Pancreas (tissue), 10 donors: ENCODE measurements at regions of chr16 and their contacts with region 1.

Region 1: DNA sequence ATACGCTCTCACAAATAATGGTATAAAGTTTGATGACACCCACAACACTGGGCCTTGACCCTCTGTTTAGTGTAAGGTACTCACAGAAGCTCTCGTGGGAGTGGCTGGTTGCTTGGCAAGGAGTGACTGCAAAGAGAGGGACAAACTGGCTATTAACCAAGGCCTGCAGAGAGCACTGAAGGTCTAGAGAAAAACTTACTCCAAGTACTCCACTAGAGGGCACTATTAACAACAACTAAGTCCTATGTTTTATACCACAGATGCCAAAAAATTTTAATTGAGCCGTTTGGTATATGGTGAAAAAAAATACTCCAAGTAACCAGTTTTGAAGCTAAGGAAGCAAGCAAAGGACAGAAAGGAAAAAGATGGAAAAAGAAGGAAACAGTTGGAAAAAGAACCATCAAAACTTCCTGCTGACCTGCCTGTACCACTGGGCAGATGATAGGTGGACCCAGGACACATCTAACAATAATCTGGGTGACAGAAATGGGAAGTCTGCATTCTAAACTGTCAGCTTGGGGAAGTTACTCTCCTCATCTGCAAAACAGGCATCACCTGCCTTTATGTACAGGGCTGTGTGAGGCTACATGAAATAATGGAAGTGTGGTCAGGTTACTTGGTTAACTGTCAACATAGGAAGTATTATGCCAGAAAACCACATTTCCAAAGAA is 23.2 kb downstream of the DYNC1LI2 start:
- DNase-seq: peak in 3 of 6 donors; percentile 23 to 41 (median 26)
- ATAC-seq: peak; percentile 83 to 95 (median 91)
- H3K4me3 ChIP-seq: no peak overlapping the region
- H3K27ac ChIP-seq: no peak overlapping the region
- H3K4me1 ChIP-seq: no peaks in the 10 kb centered on the region
- H3K27me3 ChIP-seq: no peaks in the 10 kb centered on the region
- CTCF ChIP-seq: peak in 3 of 4 donors; percentile 59 to 69 (median 60)

Region 2: DNA sequence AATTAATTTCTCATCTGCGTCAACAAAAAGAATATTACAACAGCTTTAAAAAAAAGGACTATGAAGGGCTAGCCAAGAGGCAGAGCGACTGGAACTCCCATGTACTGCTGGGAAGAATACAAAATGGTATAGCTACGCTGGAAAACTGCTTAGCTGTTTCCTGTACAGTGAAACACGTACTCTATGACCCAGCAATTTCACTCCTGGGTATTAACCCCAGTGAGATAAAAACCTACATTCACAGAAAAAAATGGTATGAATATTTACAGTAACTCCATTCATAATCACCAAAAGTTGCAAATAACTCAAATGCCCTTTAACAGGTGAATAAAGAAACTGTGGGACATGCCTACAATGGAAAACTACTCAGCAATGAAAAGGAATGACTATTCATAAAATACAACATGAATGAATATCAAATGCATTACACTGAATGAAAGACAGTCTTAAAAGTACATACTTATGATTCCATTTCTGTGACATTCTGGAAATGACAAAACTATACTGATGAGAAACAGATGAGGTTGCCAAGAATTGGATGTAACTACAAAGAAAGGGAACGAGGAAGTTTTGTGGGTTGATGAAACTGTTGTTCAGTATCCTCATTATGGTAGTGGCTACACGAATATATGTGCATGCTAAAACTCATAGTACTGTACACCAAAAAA is 59.3 kb before region 1 on chr16:
- intact Hi-C with region 1: no loop called
- DNase-seq: no peak
- ATAC-seq: no peak
- H3K4me3 ChIP-seq: no peak overlapping the region
- H3K27ac ChIP-seq: no peak overlapping the region
- H3K4me1 ChIP-seq: no peaks in the 10 kb centered on the region
- H3K27me3 ChIP-seq: no peaks in the 10 kb centered on the region
- CTCF ChIP-seq: no peak

Region 3: DNA sequence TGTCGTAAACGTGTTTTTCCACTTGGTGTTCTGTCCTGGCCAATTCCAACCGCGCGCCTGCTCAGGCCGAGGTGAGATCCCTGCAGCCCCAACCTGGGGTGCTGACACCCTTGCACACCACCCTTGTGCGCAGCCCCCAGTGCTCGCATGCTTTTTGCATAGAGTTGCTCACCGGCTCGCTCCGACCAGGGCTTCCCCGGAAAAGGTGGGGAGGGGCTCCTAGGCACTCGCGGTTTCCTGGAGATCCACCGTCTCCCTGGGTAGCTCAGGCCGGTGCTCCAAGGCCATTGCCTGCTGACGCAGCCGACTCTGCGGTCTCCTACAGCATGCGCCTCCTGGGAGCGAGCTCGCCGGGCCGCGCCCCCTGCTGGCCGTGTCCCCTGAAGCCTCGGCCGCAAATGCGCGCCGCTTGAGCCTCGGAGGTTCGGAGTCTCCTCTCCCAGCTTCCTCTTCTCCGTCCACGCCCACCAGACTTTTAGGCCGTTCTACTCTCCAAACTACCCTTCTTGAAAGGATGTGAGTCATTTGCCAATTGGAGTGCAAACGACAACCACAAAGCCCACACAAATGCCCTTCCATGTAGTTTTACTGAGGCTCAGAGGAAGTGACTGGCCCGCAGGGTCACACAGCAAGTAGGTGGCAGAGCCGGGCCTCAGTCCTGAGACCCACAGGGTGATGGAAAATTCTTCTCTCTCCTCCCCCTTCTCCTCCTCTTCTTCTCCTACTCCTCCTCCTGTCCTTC is 144.9 kb after region 1 on chr16:
- intact Hi-C with region 1: loop called in 1 of 3 experiments (anchors 5 kb)
- DNase-seq: peak; percentile 89 to 98 (median 92)
- ATAC-seq: peak; percentile 95 to 97 (median 96)
- H3K4me3 ChIP-seq: peak overlapping the region; percentile 9 to 47 (median 24)
- H3K27ac ChIP-seq: peak overlapping the region in 3 of 4 donors; percentile 10 to 57 (median 55)
- H3K4me1 ChIP-seq: peaks cover 6 to 11% (median 6%) of the 10 kb centered on the region in 3 donors
- H3K27me3 ChIP-seq: no peaks in the 10 kb centered on the region
- CTCF ChIP-seq: peak; percentile 92 to 95 (median 92)

Region 4: GRCh38 chr16:67040906-67041305 is 312.7 kb after region 1 on chr16:
- intact Hi-C with region 1: no loop called
- DNase-seq: no peak
- ATAC-seq: no peak
- H3K4me3 ChIP-seq: no peak overlapping the region
- H3K27ac ChIP-seq: no peak overlapping the region
- H3K4me1 ChIP-seq: peaks cover 0 to 9% (median 3%) of the 10 kb centered on the region in 3 donors
- H3K27me3 ChIP-seq: no peaks in the 10 kb centered on the region
- CTCF ChIP-seq: no peak